ENCODE measurements at regions of chr5 and their contacts with region 1.

Region 1: DNA sequence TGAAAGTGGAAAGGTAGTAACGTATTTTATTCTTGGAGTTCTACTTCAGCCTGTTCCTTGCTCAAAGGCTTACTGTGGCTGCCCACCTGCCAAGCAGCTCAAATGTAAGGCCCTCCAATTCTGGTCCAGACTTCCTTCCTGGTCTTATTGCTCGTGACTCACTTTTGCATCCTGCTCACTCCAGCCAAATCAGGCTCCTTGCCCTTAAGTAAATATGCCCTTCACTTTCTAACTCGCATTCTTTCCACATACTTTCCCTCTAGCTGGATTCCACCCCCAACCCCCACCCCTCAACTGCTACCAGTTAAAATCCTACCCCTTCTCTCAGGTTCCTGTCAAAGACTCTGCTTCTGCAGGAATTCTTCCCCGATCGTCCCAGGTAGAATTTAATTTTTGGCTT is 96.6 kb downstream of the GALNT10 start:
- DNase-seq: peak; percentile 95
- H3K4me3 ChIP-seq: peak overlapping the region in 2 of 3 experiments; percentile 13 to 54
- H3K27ac ChIP-seq: peak overlapping the region; percentile 95
- H3K4me1 ChIP-seq: peaks cover 43% of the 10 kb centered on the region
- H3K27me3 ChIP-seq: no peaks in the 10 kb centered on the region
- CTCF ChIP-seq: no peak
- POLR2A ChIP-seq: peak; percentile 79

Region 2: GRCh38 chr5:154038707-154039457 is 248.3 kb before region 1 on chr5 and contains the starts of genes FAM114A2 and MFAP3:
- CTCF ChIA-PET with region 1: no interaction called
- POLR2A ChIA-PET with region 1: no interaction called
- dilution Hi-C with region 1: no loop called
- intact Hi-C with region 1: loop called (anchors 5 kb)
- DNase-seq: peak; percentile 88
- H3K4me3 ChIP-seq: peak within 1 kb of the TSS; percentile 55 to 87 (median 79)
- H3K27ac ChIP-seq: peak within 1 kb of the TSS; percentile 52
- H3K4me1 ChIP-seq: peaks cover 28% of the 10 kb centered on the region
- H3K27me3 ChIP-seq: no peaks in the 10 kb centered on the region
- CTCF ChIP-seq: no peak
- POLR2A ChIP-seq: peak; percentile 71
- total RNA-seq, gene FAM114A2: 26.6 and 31.3 TPM in 2 replicates
- total RNA-seq, gene MFAP3: 31.7 and 35.3 TPM in 2 replicates

Region 3: DNA sequence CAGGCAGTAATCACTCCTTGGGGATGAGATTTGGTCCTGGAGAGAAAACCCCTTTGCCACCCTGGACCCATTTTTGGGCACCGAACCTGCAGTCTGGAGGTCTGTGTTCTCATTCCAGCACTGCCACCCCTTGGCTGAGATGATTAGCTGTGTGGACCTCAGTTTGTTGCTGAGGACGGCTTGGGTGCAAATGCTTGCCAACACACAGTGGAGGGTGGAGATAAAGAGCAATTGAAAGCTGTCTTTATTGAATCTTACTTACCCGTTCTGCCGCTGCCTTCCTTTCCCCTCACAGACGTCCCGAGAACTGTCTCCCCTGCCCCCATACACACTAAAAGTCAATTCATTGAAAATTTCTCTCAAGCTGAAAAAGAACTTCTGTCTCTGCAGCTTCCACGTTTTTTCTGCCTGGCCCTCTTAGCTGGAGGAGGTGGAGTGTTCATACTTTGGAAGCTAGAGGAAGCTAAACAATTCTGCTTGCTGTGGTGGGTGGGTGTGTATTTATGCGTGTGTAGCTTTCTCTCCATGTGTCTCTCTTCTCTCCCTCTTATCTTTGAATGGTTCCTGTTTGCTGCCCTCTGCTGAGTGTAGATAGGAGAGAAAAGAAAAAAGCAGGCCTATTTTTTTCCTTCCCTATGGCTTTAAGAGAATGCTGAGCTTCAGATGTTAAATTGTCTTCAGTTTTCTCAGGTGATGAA is 90.0 kb before region 1 on chr5:
- CTCF ChIA-PET with region 1: interaction called, 31 read pairs
- POLR2A ChIA-PET with region 1: interaction called, 3 read pairs
- dilution Hi-C with region 1: no loop called
- intact Hi-C with region 1: loop called (anchors 1 kb)
- DNase-seq: peak; percentile 81
- H3K4me3 ChIP-seq: no peak overlapping the region
- H3K27ac ChIP-seq: peak overlapping the region; percentile 12
- H3K4me1 ChIP-seq: peaks cover 43% of the 10 kb centered on the region
- H3K27me3 ChIP-seq: no peaks in the 10 kb centered on the region
- CTCF ChIP-seq: peak in 1 of 2 donors; percentile 26
- POLR2A ChIP-seq: no peak

Region 4: GRCh38 chr5:154257046-154257445 is 30.1 kb before region 1 on chr5:
- CTCF ChIA-PET with region 1: interaction called, 3 read pairs
- POLR2A ChIA-PET with region 1: no interaction called
- dilution Hi-C with region 1: no loop called
- intact Hi-C with region 1: loop called (anchors 1 kb)
- DNase-seq: no peak
- H3K4me3 ChIP-seq: no peak overlapping the region
- H3K27ac ChIP-seq: no peak overlapping the region
- H3K4me1 ChIP-seq: peaks cover 14% of the 10 kb centered on the region
- H3K27me3 ChIP-seq: no peaks in the 10 kb centered on the region
- CTCF ChIP-seq: no peak
- POLR2A ChIP-seq: no peak

Region 5: DNA sequence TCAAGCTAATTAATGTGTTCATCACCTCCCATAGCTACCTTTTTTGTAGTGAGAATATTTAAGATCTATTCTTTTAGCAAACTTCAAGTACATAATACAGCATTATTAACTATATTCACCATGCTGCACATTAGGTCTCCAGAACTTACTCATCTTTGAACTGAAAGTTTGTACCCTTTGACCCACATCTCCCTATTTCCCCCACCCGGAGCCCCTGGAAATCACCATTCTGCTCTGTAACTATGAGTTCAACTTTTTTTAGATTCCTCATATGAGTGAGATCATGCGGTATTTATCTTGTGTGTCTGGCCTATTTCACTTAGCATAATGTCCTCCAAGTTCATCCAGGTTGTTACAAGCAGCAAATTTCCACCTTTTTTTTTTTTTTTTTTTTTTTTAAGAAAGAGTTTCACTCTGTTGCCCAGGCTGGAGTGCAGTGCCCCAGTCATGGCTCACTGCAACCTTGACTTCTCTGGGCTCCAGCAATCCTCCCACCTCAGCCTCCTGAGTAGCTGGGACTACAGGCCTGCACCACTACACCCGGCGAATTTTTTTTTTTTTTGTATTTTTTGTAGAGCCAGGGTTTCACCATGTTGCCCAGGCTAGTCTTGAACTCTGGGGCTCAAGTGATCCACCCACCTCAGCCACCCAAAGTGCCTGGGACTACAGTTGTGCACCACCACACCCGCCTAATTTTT is 58.3 kb after region 1 on chr5:
- CTCF ChIA-PET with region 1: no interaction called
- POLR2A ChIA-PET with region 1: no interaction called
- dilution Hi-C with region 1: no loop called
- intact Hi-C with region 1: no loop called
- DNase-seq: no peak
- H3K4me3 ChIP-seq: no peak overlapping the region
- H3K27ac ChIP-seq: no peak overlapping the region
- H3K4me1 ChIP-seq: no peaks in the 10 kb centered on the region
- H3K27me3 ChIP-seq: no peaks in the 10 kb centered on the region
- CTCF ChIP-seq: no peak
- POLR2A ChIP-seq: no peak

Region 6: GRCh38 chr5:154368041-154368800 is 81.1 kb after region 1 on chr5:
- CTCF ChIA-PET with region 1: interaction called, 4 read pairs
- POLR2A ChIA-PET with region 1: no interaction called
- dilution Hi-C with region 1: no loop called
- intact Hi-C with region 1: loop called (anchors 1 kb)
- DNase-seq: peak; percentile 86
- H3K4me3 ChIP-seq: peak overlapping the region in 1 of 3 experiments; percentile 59
- H3K27ac ChIP-seq: peak overlapping the region; percentile 97
- H3K4me1 ChIP-seq: peaks cover 52% of the 10 kb centered on the region
- H3K27me3 ChIP-seq: no peaks in the 10 kb centered on the region
- CTCF ChIP-seq: no peak
- POLR2A ChIP-seq: no peak

Region 7: DNA sequence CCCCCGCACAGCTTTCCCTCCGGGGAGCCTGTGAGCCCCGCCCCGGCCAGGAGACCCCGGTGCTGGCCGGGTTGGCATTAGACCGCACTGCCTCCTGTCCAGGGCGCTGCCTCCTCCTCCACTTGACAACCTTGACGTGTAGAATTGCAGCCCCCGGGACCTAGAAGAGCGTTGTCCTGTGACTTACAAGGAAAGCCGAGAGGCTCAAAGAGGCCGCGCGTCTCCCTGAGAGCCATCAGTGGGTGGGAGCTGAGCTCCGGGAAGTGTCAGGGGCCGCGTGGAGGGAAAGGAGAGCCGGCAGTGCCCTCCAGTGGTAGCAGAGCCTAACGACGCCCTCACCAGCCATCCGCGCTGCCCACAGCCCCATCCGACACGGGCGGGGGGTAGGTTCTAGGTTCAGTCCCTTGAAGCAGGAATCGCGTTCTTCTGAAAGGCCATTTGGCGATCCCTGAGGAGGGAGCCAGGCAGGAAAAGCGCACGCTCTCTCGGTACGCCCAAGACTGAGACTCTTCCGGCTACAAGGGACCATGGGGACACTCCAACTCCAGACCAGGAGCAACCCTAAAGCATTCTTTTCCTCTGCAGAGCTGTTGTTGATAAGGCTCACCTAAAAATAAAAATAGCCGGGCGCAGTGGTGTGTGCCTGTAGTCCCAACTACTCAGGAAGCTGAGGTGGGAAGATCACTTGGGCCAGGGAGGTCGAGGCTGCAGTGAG is 118.1 kb after region 1 on chr5:
- CTCF ChIA-PET with region 1: interaction called, 15 read pairs
- POLR2A ChIA-PET with region 1: no interaction called
- dilution Hi-C with region 1: no loop called
- intact Hi-C with region 1: loop called (anchors 1 kb)
- DNase-seq: peak; percentile 76
- H3K4me3 ChIP-seq: peak overlapping the region in 1 of 3 experiments; percentile 6
- H3K27ac ChIP-seq: no peak overlapping the region
- H3K4me1 ChIP-seq: no peaks in the 10 kb centered on the region
- H3K27me3 ChIP-seq: no peaks in the 10 kb centered on the region
- CTCF ChIP-seq: peak; percentile 88 to 95
- POLR2A ChIP-seq: no peak

Region 8: GRCh38 chr5:154493274-154493673 is 206.1 kb after region 1 on chr5:
- CTCF ChIA-PET with region 1: no interaction called
- POLR2A ChIA-PET with region 1: no interaction called
- dilution Hi-C with region 1: no loop called
- intact Hi-C with region 1: no loop called
- DNase-seq: no peak
- H3K4me3 ChIP-seq: no peak overlapping the region
- H3K27ac ChIP-seq: no peak overlapping the region
- H3K4me1 ChIP-seq: no peaks in the 10 kb centered on the region
- H3K27me3 ChIP-seq: peaks cover 27 to 54% of the 10 kb centered on the region in 2 experiments
- CTCF ChIP-seq: no peak
- POLR2A ChIP-seq: no peak

Region 9: DNA sequence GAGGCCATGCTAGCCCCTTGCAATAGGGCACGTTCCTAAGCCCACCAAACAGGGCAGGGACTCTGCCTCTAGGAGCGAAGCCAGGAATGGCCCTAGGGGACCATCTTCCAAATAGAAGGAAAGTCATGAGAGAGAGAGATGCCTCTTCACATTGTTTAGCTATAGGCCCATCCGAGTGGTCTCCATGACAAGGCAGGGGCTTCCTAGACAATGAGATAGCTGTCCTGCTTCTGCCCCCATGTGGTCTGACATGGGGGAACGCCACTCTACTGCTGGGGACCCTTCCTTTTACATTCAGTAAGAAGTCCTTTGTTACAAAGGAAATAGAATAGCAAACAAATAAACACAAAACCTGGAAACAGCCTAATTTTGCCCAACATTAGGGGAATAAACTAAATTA is 708.5 kb after region 1 on chr5:
- CTCF ChIA-PET with region 1: no interaction called
- POLR2A ChIA-PET with region 1: no interaction called
- dilution Hi-C with region 1: no loop called
- intact Hi-C with region 1: loop called (anchors 5 kb)
- DNase-seq: peak; percentile 39
- H3K4me3 ChIP-seq: no peak overlapping the region
- H3K27ac ChIP-seq: no peak overlapping the region
- H3K4me1 ChIP-seq: peaks cover 15% of the 10 kb centered on the region
- H3K27me3 ChIP-seq: no peaks in the 10 kb centered on the region
- CTCF ChIP-seq: peak; percentile 16 to 36
- POLR2A ChIP-seq: no peak